BJ (cell line): ENCODE measurements at regions of chr6 and their contacts with region 1.

Region 1: DNA sequence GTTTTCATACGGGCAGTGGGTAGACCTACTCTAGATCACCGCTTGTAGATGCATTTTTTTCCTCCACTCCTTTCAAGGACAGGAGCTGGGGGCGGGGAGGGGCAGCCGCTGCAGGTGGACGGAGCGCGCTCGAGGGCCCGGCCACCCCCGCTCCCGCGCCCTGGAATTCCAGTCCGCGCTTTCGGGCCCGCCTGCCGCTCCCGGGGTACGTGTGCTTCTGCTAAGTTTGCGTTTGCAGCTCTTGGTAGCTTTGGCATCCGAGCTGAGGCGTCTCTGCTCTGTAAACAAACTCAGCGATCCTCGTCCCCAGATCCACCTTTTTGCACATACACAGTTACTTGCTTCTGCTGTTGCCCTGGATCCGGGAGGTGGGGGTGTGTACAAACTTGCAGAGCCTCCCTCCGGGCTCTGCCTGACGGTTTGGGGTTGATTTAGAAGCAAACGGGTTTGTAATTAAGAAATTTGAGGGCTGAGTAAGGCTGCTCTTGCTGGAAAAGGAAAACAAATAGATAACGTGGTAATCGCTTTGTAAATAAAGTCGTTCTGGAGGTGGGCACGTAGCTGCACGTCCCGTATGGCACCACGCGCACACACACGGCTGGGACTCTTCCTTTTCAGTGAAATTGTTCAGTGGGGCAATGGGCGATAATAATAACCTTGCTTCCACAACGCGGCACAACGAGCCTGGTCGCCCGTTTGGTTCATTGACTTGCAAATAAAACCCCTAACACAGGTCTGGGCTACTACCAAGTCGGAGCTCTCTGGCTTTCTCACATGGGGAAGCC is 976 bp upstream of the CITED2 start:
- DNase-seq: peak; percentile 91
- H3K4me3 ChIP-seq: peak overlapping the region; percentile 70
- H3K27me3 ChIP-seq: no peaks in the 10 kb centered on the region
- CTCF ChIP-seq: peak; percentile 27; the same call in 1 of the 2 replicates

Region 2: GRCh38 chr6:139349464-139350020 is 25.9 kb before region 1 on chr6:
- CTCF ChIA-PET with region 1: no interaction called
- POLR2A ChIA-PET with region 1: no interaction called
- DNase-seq: no peak
- H3K4me3 ChIP-seq: no peak overlapping the region
- H3K27me3 ChIP-seq: no peaks in the 10 kb centered on the region
- CTCF ChIP-seq: no peak

Region 3: DNA sequence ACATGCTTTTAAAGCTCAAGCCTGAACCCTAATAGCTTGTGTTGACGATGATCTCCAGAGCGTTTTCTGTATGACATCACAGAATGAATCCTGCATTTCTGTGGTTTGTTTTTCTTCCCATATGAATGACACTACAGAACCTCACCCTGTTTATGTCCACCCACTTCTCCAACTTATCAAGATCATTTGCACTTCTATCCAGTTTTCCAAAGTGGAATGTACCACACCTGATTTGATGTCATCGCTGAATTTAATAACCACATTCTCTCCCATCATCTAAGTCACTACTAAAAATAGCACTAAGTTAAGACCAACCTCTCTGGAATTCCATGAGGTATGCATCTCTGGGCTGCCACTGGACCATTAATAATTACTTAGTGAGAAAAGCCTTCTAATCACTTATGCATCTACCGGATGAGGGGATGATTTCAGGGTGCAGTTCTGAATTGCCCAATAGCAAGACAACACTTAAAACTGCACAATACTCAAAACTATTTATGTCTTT is 32.3 kb after region 1 on chr6:
- CTCF ChIA-PET with region 1: interaction called, 3 read pairs
- POLR2A ChIA-PET with region 1: interaction called, 27 read pairs
- DNase-seq: peak; percentile 100
- H3K4me3 ChIP-seq: no peak overlapping the region
- H3K27me3 ChIP-seq: no peaks in the 10 kb centered on the region
- CTCF ChIP-seq: no peak

Region 4: GRCh38 chr6:139577763-139578604 is 202.6 kb after region 1 on chr6:
- CTCF ChIA-PET with region 1: no interaction called
- POLR2A ChIA-PET with region 1: interaction called, 15 read pairs
- DNase-seq: peak; percentile 84
- H3K4me3 ChIP-seq: no peak overlapping the region
- H3K27me3 ChIP-seq: no peaks in the 10 kb centered on the region
- CTCF ChIP-seq: no peak

Region 5: DNA sequence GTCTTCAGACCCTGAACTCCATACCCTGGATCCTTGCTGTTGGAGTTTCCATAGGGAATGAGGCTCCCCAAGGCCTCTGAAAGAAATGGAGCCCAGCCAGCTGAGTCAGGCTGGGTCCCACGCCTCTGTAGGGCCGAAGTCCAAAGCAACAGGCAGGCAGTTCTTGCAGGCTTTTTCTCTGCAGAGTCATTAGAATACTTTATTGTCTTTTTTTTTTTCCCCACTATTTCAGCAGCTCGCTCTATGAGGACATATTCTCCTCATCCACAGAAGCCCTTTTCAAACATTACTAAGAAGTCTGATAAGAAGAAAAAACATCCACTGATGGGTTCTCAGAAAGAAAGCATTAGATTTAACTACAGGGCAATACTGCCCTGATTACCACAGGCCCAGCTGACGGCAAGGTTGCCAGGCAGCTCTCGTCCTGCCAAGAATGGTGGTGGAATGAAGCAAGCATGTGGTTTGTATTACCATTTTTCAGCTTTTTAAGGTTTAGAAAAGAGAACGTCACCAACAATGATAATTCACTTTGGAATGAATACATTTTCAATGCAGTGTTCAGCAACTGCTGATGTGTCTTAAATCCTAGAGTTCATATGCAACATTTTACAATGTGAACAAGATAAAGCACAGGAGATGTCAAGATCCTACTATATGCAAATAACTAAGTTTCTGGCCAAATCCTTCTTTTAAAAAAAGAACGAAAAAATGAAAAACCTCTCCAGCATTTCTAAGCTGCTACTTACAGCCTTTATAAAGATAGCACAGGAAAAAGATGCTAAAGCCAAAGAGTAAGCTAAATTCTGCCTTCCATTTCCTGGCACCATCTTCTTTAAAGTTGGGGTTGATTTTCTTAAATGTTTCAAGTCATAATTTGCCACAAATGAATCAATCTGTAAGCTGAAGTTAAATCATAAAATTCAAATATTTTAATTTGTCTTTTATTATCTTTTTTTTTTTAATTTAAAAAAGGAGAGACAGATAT is 222.6 kb after region 1 on chr6:
- CTCF ChIA-PET with region 1: no interaction called
- POLR2A ChIA-PET with region 1: interaction called, 24 read pairs
- DNase-seq: peak; percentile 98
- H3K4me3 ChIP-seq: no peak overlapping the region
- H3K27me3 ChIP-seq: no peaks in the 10 kb centered on the region
- CTCF ChIP-seq: no peak

Region 6: GRCh38 chr6:139708337-139709199 is 333.1 kb after region 1 on chr6:
- CTCF ChIA-PET with region 1: no interaction called
- POLR2A ChIA-PET with region 1: interaction called, 10 read pairs
- DNase-seq: peak; percentile 66
- H3K4me3 ChIP-seq: no peak overlapping the region
- H3K27me3 ChIP-seq: no peaks in the 10 kb centered on the region
- CTCF ChIP-seq: no peak

Region 7: GRCh38 chr6:139764498-139764986 is 389.1 kb after region 1 on chr6:
- CTCF ChIA-PET with region 1: interaction called, 4 read pairs
- POLR2A ChIA-PET with region 1: interaction called, 24 read pairs
- DNase-seq: peak; percentile 98
- H3K4me3 ChIP-seq: no peak overlapping the region
- H3K27me3 ChIP-seq: no peaks in the 10 kb centered on the region
- CTCF ChIP-seq: no peak

Region 8: DNA sequence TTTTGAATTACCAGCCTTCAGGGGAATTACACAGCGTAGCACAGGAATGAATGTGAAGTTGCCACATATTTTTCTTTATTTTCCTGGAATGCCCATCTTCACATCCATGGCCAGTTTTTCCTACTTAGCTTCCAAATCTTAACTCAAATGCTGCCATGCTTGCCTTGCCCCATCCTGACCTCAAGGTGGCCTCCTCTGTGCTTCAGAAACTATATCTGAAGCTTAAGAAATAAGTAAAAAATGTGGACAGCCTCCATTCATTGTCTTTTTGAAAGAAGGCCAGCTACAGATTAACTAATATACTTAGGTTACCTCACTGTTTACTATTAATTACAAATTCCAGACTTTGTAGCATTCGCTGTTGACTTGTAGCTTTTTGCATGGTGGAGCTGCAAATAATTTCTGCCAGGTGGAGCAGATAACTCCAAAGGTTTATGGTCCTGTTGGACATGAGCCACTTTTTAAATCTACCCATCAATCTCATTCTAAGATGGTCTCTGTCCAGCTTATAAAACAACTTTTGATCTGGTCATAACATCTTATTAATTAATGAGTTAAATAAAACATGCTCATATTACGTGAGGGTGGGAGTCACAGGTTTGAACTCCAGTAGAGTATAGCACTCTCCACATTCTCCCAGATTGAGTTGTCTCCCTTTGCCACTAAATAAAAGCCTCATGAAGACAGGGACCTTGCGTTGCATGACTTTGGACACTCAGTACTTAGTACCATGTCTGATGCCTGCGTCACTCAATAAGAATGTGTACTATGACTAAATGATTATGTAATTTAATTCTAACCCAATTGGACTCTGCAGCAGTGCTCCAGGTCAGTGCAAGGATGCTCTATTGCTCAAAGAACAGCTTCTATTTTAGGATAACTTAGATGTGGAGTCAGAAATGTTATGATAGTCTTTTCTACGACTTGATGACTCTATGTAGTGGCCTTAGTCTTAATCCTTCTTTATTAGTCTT is 677.6 kb after region 1 on chr6:
- CTCF ChIA-PET with region 1: no interaction called
- POLR2A ChIA-PET with region 1: interaction called, 18 read pairs
- DNase-seq: no peak
- H3K4me3 ChIP-seq: no peak overlapping the region
- H3K27me3 ChIP-seq: no peaks in the 10 kb centered on the region
- CTCF ChIP-seq: peak; percentile 56